ENCODE measurements at regions of chr3 and their contacts with region 1.

Region 1: DNA sequence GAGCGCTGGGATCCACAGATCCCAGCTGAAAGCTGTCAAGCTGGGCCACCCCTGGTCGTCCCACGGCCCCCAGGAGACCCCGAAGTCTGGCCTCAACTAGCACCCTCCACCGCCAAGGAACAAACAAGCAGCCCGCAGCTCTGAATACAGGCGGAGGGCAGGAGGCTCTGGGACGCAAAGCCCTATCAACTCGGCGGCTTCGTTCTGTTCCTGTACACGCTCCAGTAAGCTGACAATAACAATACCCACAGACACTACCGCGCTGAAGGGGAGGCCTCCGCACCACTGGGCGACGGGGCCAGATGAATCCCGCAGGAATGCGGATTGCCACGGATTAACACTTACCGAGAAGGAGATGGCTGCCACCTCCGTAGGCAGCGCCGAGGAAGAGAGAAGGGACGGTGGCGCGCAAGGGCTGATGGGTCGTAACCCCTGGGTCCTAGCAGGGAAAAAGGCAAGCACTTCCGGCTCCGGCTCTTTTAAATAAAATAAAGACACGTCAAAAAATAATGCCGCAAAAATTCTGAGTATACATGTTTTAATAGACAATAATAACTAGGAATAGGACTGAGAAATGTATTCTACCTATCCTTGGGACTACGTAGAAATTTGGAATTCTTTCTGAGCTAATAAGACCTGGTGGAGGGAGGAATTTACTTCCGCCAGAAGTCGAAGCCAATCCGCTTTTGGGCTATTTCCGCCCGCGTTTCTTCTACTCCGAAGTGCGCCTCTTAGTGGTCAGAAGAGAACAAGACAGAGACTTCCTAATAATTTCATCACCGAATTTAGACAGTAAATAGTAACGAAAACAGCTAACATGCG is at the start of gene RPL32:
- DNase-seq: peak; percentile 72 to 96 (median 85)
- ATAC-seq: peak; percentile 86 to 87
- H3K4me3 Mint-ChIP-seq: peak within 1 kb of the TSS; percentile 94 to 98 (median 96)
- H3K27ac Mint-ChIP-seq: peak within 1 kb of the TSS; percentile 97 to 100 (median 100)
- H3K4me1 Mint-ChIP-seq: peaks cover 22 to 49% (median 46%) of the 10 kb centered on the region in 4 donors
- H3K27me3 Mint-ChIP-seq: no peaks in the 10 kb centered on the region
- polyA plus RNA-seq, gene RPL32: 4,376 to 5,220 (median 4,420) TPM

Region 2: GRCh38 chr3:12782172-12782815 is 59.1 kb before region 1 on chr3:
- POLR2A ChIA-PET with region 1: interaction called, 18 read pairs
- DNase-seq: no peak
- ATAC-seq: no peak
- H3K4me3 Mint-ChIP-seq: no peak overlapping the region
- H3K27ac Mint-ChIP-seq: no peak overlapping the region
- H3K4me1 Mint-ChIP-seq: peaks cover 0 to 1% (median 0%) of the 10 kb centered on the region in 4 donors
- H3K27me3 Mint-ChIP-seq: peaks cover 6 to 24% (median 22%) of the 10 kb centered on the region in 5 donors

Region 3: DNA sequence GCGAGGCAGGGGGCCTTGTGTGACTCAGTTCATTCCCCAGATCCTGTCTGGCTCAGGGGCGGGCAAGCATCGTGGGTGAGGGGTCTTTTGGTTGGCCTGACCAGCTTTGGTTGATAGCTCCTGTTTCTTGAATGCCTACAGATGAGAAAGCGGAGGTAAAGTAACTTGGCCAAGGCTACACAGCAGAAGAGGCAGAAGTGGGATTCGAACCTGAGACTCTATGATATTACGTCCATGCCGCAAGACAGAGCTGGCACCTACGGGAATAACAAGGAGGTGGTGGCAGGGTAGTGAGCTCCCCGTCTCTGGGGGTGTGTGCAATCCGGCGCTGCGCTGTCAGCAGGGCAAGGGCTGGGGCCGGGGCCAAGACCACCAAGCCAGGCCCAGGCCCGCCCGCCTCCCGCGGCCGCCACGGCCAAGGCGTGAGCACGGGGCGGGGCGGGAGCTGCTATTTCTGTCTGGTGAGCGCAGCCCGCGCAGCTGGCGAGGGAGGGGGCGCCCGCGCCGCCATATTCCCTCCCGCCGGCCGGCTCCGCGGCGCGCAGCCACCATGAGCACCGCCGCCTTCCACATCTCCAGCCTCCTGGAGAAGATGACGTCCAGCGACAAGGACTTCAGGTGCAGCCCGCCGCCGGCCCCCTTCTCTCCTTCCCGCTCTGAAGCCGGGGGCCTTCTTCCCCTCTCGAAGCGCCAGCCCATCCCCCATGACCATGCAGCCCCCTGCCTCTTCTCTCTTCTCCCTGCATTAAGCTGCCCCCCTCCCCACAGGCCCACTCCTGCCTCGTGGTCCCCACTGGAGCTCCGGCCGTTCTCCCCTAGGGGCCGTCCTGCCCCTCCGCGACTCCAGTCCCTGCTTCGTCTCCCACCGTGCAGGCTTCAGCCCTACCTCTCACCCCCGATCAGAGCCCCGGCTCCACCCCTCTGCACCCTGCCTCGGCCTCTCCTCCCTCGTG is 44.9 kb before region 1 on chr3 and contains the start of gene CAND2:
- POLR2A ChIA-PET with region 1: interaction called, 18 read pairs
- DNase-seq: peak in 7 of 10 donors; percentile 12 to 60 (median 40)
- ATAC-seq: peak; percentile 82 to 95
- H3K4me3 Mint-ChIP-seq: peak within 1 kb of the TSS; percentile 84 to 94 (median 89)
- H3K27ac Mint-ChIP-seq: peak within 1 kb of the TSS; percentile 26 to 92 (median 79)
- H3K4me1 Mint-ChIP-seq: peaks cover 5 to 23% (median 13%) of the 10 kb centered on the region in 4 donors
- H3K27me3 Mint-ChIP-seq: peaks cover 0 to 12% (median 3%) of the 10 kb centered on the region in 5 donors
- polyA plus RNA-seq, gene CAND2: 1.8 to 3.6 (median 2.6) TPM

Region 4: GRCh38 chr3:12810013-12810780 is 31.2 kb before region 1 on chr3:
- POLR2A ChIA-PET with region 1: interaction called, 34 read pairs
- DNase-seq: peak; percentile 92 to 99 (median 98)
- ATAC-seq: peak; percentile 96 to 97
- H3K4me3 Mint-ChIP-seq: peak overlapping the region; percentile 65 to 84 (median 68)
- H3K27ac Mint-ChIP-seq: peak overlapping the region in 9 of 10 donors; percentile 25 to 92 (median 90)
- H3K4me1 Mint-ChIP-seq: peaks cover 4 to 22% (median 10%) of the 10 kb centered on the region in 4 donors
- H3K27me3 Mint-ChIP-seq: no peaks in the 10 kb centered on the region

Region 5: DNA sequence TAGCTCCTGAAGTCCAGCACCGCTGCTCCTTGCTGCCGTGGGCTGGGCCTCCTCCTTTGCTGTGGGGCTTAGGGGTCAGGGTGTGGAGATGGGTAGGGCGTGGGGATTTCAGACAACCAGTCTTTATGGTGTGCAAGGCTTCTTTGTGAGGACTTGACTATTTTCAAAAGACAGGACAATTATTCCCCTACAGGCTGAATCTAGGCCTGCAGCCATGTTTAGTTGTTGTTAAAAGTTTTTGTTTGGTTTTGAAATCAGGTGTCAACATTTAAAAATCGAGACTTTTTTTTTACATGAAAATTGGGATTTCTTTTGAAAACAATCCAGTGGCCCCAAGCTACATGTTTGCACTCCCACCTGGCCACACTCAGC is 10.6 kb before region 1 on chr3:
- POLR2A ChIA-PET with region 1: interaction called, 27 read pairs
- DNase-seq: no peak
- ATAC-seq: no peak
- H3K4me3 Mint-ChIP-seq: no peak overlapping the region
- H3K27ac Mint-ChIP-seq: peak overlapping the region in 8 of 10 donors; percentile 5 to 81 (median 48)
- H3K4me1 Mint-ChIP-seq: peaks cover 0 to 4% (median under 1%) of the 10 kb centered on the region in 4 donors
- H3K27me3 Mint-ChIP-seq: no peaks in the 10 kb centered on the region

Measured in naive thymus-derived CD8-positive, alpha-beta T cell (primary cell).